CD4-positive, alpha-beta T cell (primary cell): ENCODE measurements at regions of chr5 and their contacts with region 1.

Region 1: GRCh38 chr5:148383564-148384379 is at the start of gene FBXO38:
- DNase-seq: peak; percentile 93 to 99 (median 97)
- ATAC-seq: peak; percentile 94
- H3K4me3 ChIP-seq: peak within 1 kb of the TSS; percentile 84
- H3K4me3 Mint-ChIP-seq: peak within 1 kb of the TSS; percentile 89
- H3K27ac ChIP-seq: peak within 1 kb of the TSS; percentile 92 to 96
- H3K27ac Mint-ChIP-seq: peak within 1 kb of the TSS; percentile 96
- H3K4me1 ChIP-seq: peaks cover 25% of the 10 kb centered on the region
- H3K4me1 Mint-ChIP-seq: peaks cover 71% of the 10 kb centered on the region
- H3K27me3 ChIP-seq: no peaks in the 10 kb centered on the region
- H3K27me3 Mint-ChIP-seq: no peaks in the 10 kb centered on the region
- CTCF ChIP-seq: no peak
- total RNA-seq, gene FBXO38: 45.7 to 47.3 TPM

Region 2: DNA sequence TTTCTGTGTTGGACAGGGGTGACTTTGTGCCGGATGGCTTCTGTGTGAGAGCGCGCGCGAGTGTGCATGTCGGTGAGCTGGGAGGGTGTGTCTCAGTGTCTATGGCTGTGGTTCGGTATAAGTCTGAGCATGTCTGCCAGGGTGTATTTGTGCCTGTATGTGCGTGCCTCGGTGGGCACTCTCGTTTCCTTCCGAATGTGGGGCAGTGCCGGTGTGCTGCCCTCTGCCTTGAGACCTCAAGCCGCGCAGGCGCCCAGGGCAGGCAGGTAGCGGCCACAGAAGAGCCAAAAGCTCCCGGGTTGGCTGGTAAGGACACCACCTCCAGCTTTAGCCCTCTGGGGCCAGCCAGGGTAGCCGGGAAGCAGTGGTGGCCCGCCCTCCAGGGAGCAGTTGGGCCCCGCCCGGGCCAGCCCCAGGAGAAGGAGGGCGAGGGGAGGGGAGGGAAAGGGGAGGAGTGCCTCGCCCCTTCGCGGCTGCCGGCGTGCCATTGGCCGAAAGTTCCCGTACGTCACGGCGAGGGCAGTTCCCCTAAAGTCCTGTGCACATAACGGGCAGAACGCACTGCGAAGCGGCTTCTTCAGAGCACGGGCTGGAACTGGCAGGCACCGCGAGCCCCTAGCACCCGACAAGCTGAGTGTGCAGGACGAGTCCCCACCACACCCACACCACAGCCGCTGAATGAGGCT is 442.4 kb after region 1 on chr5 and contains the start of gene ADRB2:
- CTCF ChIA-PET with region 1: no interaction called
- POLR2A ChIA-PET with region 1: no interaction called
- intact Hi-C with region 1: loop called in 1 of 2 experiments (anchors 10 kb)
- DNase-seq: peak; percentile 70 to 96 (median 82)
- ATAC-seq: peak; percentile 86
- H3K4me3 ChIP-seq: peak within 1 kb of the TSS; percentile 88
- H3K4me3 Mint-ChIP-seq: peak within 1 kb of the TSS; percentile 84
- H3K27ac ChIP-seq: peak within 1 kb of the TSS; percentile 53 to 68
- H3K27ac Mint-ChIP-seq: peak within 1 kb of the TSS; percentile 32
- H3K4me1 ChIP-seq: peaks cover 22% of the 10 kb centered on the region
- H3K4me1 Mint-ChIP-seq: peaks cover 30% of the 10 kb centered on the region
- H3K27me3 ChIP-seq: no peaks in the 10 kb centered on the region
- H3K27me3 Mint-ChIP-seq: peaks cover 13% of the 10 kb centered on the region
- CTCF ChIP-seq: no peak
- total RNA-seq, gene ADRB2: 1.2 to 1.6 TPM